ENCODE measurements at regions of chr2 and their contacts with region 1.

Region 1: GRCh38 chr2:64730551-64731262 is 77.0 kb upstream of the SERTAD2 start:
- DNase-seq: peak; percentile 40 to 65 (median 64)
- H3K4me3 ChIP-seq: peak overlapping the region; percentile 43 to 99 (median 84)
- H3K4me3 Mint-ChIP-seq: peak overlapping the region; percentile 78 to 90
- H3K27ac ChIP-seq: peak overlapping the region; percentile 65 to 99
- H3K27ac Mint-ChIP-seq: peak overlapping the region; percentile 92 to 98 (median 95)
- H3K4me1 ChIP-seq: peaks cover 44 to 51% of the 10 kb centered on the region in 2 donors
- H3K4me1 Mint-ChIP-seq: peaks cover 49% of the 10 kb centered on the region
- H3K27me3 ChIP-seq: no peaks in the 10 kb centered on the region
- H3K27me3 Mint-ChIP-seq: no peaks in the 10 kb centered on the region
- CTCF ChIP-seq: no peak

Region 2: DNA sequence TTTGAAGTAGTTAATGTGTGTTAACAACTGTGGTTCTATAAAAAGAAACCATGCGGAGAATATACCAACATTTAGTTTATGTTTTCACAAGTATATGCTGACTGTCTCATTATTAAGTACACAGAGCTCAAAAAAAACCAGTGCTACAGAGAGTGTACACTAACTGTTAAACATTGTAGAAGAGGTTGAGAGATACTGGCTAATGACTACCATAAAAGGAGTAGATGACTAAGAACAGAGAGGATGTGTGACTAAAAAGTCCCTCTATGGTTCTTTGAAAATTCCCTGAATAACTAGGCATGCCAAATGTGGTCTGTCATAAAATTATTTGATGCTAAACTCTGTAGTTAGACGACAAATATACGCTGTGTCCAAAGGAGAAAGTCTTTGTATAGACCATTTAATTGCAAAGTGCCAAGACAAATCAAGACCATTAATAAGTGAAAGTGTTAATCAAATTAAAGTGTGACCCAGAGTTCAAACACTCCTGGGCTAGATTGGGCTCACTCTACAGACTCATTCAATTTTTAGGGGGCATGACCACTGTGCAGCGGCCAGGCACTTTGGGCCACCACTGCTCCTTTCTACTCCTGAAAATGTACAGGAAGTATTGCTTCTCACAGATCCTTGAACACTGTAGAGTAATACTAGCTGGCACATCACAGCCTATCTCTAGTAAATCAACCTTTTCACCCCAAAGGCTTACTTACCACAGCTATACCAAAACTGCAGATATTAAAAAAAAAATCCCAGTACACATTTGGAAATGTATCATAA is 31.9 kb before region 1 on chr2:
- intact Hi-C with region 1: loop called in 1 of 2 experiments (anchors 5 kb)
- DNase-seq: peak; percentile 23 to 78 (median 59)
- H3K4me3 ChIP-seq: no peak overlapping the region
- H3K4me3 Mint-ChIP-seq: no peak overlapping the region
- H3K27ac ChIP-seq: peak overlapping the region in 1 of 2 donors; percentile 86
- H3K27ac Mint-ChIP-seq: peak overlapping the region; percentile 10 to 98 (median 80)
- H3K4me1 ChIP-seq: peaks cover 38 to 40% of the 10 kb centered on the region in 2 donors
- H3K4me1 Mint-ChIP-seq: peaks cover 50% of the 10 kb centered on the region
- H3K27me3 ChIP-seq: no peaks in the 10 kb centered on the region
- H3K27me3 Mint-ChIP-seq: no peaks in the 10 kb centered on the region
- CTCF ChIP-seq: no peak

Region 3: GRCh38 chr2:64787702-64788101 is 57.0 kb after region 1 on chr2:
- intact Hi-C with region 1: no loop called
- DNase-seq: peak; percentile 60 to 86 (median 80)
- H3K4me3 ChIP-seq: no peak overlapping the region
- H3K4me3 Mint-ChIP-seq: no peak overlapping the region
- H3K27ac ChIP-seq: no peak overlapping the region
- H3K27ac Mint-ChIP-seq: peak overlapping the region in 2 of 7 donors; percentile 63 to 72
- H3K4me1 ChIP-seq: peaks cover 14 to 16% of the 10 kb centered on the region in 2 donors
- H3K4me1 Mint-ChIP-seq: peaks cover 24% of the 10 kb centered on the region
- H3K27me3 ChIP-seq: no peaks in the 10 kb centered on the region
- H3K27me3 Mint-ChIP-seq: no peaks in the 10 kb centered on the region
- CTCF ChIP-seq: no peak